T-cell (primary cell): ENCODE measurements at regions of chr2 and their contacts with region 1.

Region 1: GRCh38 chr2:234425619-234426603 is 71.0 kb downstream of the ARL4C start:
- DNase-seq: peak; percentile 66 to 93 (median 84)
- ATAC-seq: peak; percentile 79 to 88 (median 86)
- H3K4me3 ChIP-seq: peak overlapping the region; percentile 8 to 48
- H3K4me3 Mint-ChIP-seq: peak overlapping the region; percentile 37 to 81 (median 50)
- H3K27ac ChIP-seq: peak overlapping the region; percentile 94
- H3K27ac Mint-ChIP-seq: peak overlapping the region; percentile 97 to 98
- H3K4me1 ChIP-seq: peaks cover 71 to 89% of the 10 kb centered on the region in 2 experiments
- H3K4me1 Mint-ChIP-seq: peaks cover 93 to 98% (median 96%) of the 10 kb centered on the region in 3 donors
- H3K27me3 ChIP-seq: no peaks in the 10 kb centered on the region
- H3K27me3 Mint-ChIP-seq: no peaks in the 10 kb centered on the region

Region 2: GRCh38 chr2:234288974-234289455 is 136.9 kb before region 1 on chr2:
- CTCF ChIA-PET with region 1: interaction called, 3 to 16 read pairs
- POLR2A ChIA-PET with region 1: interaction called, 3 to 48 read pairs
- DNase-seq: peak; percentile 53 to 88 (median 70)
- ATAC-seq: peak in 1 of 4 experiments; percentile 1
- H3K4me3 ChIP-seq: no peak overlapping the region
- H3K4me3 Mint-ChIP-seq: peak overlapping the region in 1 of 3 donors; percentile 75
- H3K27ac ChIP-seq: peak overlapping the region; percentile 100
- H3K27ac Mint-ChIP-seq: peak overlapping the region; percentile 91 to 99
- H3K4me1 ChIP-seq: peaks cover 42 to 65% of the 10 kb centered on the region in 2 experiments
- H3K4me1 Mint-ChIP-seq: peaks cover 68 to 80% (median 74%) of the 10 kb centered on the region in 3 donors
- H3K27me3 ChIP-seq: no peaks in the 10 kb centered on the region
- H3K27me3 Mint-ChIP-seq: no peaks in the 10 kb centered on the region

Region 3: DNA sequence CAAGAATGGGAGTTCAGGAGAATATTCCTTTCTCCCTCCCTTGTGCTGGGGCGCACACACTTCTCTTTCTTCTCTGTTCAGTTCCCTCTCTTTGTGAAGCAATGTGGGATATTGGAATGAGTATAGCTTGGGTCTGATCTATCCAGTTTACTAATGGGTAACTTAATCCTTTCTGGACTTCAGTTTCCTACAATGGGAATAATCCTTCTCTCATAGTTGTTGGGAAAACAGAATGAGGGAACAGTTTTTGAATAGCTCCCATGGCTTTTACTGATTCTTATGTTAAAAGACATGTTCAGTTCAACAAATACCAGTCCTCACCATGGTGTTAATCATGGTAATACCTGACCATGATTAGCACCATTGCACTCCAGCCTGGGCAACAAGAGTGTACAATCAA is 22.2 kb before region 1 on chr2:
- CTCF ChIA-PET with region 1: interaction called in 1 of 2 experiments, 11 read pairs
- POLR2A ChIA-PET with region 1: no interaction called
- DNase-seq: no peak
- ATAC-seq: no peak
- H3K4me3 ChIP-seq: no peak overlapping the region
- H3K4me3 Mint-ChIP-seq: no peak overlapping the region
- H3K27ac ChIP-seq: no peak overlapping the region
- H3K27ac Mint-ChIP-seq: no peak overlapping the region
- H3K4me1 ChIP-seq: peaks cover 0 to 4% of the 10 kb centered on the region in 2 experiments
- H3K4me1 Mint-ChIP-seq: peaks cover 36 to 55% (median 51%) of the 10 kb centered on the region in 3 donors
- H3K27me3 ChIP-seq: no peaks in the 10 kb centered on the region
- H3K27me3 Mint-ChIP-seq: no peaks in the 10 kb centered on the region

Region 4: DNA sequence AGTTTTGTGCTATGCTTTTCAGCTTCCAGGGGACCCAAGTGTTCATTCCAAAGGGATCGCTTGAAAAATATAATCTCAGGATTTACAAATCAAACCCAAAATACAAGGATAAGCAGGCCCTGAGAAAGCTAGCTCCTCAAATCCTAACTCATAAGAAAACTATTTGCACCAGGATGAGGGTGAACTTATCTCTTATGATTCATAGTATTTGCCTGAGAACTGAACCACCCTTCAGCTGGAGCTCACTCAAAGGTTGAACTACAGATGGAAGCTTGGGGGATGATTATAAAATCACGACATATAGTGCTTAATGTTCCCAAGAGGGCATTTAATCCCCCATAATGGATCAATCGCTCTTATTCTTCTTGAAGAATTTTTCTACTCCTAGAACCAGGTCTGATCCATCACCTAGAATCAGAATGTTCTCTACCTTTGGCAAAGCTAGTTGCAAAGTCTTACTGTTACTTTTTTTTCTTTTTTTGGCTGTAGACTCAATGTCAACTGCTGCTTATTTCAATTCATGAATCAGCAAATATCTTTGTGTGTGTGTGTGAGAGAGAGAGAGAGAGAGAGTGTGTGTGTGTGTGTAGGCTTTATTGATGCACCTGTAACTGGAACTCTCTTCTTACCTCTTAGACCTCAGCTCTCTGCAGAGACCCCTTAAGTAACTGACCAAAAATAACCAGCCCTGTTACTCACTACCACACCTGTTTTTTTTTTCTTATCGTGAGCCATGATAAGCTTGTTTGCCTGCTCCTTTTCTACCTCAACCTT is 26.1 kb after region 1 on chr2:
- CTCF ChIA-PET with region 1: interaction called, 12 to 28 read pairs
- POLR2A ChIA-PET with region 1: interaction called, 17 to 74 read pairs
- DNase-seq: peak in 2 of 35 experiments; percentile 40 to 50
- ATAC-seq: peak in 3 of 4 experiments; percentile 3 to 11 (median 11)
- H3K4me3 ChIP-seq: peak overlapping the region; percentile 64 to 83
- H3K4me3 Mint-ChIP-seq: peak overlapping the region; percentile 87 to 90 (median 88)
- H3K27ac ChIP-seq: peak overlapping the region; percentile 90
- H3K27ac Mint-ChIP-seq: peak overlapping the region; percentile 91 to 99
- H3K4me1 ChIP-seq: peaks cover 49 to 68% of the 10 kb centered on the region in 2 experiments
- H3K4me1 Mint-ChIP-seq: peaks cover 82 to 94% (median 94%) of the 10 kb centered on the region in 3 donors
- H3K27me3 ChIP-seq: no peaks in the 10 kb centered on the region
- H3K27me3 Mint-ChIP-seq: no peaks in the 10 kb centered on the region

Region 5: DNA sequence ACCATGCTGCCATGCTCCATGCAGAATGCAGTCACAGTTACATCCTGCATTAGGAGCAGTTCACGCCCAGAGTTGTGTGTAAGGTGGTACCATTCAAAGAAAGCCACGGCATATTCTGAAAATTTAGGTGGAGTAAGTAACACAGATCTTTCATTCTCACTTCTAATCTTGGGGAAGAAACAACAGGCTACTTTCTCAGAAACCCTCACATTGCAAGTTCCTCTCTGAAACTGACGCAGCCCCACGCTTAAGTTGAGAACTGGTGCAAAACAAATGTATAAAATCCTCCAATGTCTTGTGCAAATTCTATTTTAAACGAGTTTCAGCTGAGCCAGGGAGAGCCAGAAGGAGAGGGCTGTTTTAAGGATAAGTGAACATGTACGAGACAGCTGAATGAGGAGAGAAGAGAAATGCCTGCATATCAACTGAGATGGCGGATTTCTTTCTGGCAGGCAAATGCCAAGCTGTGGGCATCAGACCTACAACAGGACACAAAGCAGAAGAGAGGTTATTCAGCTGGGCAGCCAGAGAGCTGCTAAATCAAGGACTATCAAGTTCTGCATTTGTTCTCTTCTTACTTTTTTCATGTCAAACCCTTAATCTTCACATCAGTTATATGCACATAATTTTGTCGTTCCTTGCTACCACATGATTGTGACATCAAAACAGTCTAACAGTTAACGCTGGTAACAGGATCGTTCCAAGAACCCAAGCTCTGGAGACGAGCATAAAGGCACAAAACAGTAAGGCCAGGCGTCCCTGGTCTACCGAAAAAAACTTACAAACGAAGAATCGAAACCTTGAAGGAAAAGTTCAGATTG is 64.6 kb after region 1 on chr2:
- CTCF ChIA-PET with region 1: interaction called, 6 to 7 read pairs
- POLR2A ChIA-PET with region 1: interaction called, 6 to 23 read pairs
- DNase-seq: peak in 11 of 35 experiments; percentile 16 to 56 (median 29)
- ATAC-seq: peak in 3 of 4 experiments; percentile 32 to 44 (median 35)
- H3K4me3 ChIP-seq: peak overlapping the region; percentile 81 to 99
- H3K4me3 Mint-ChIP-seq: peak overlapping the region; percentile 95 to 99 (median 99)
- H3K27ac ChIP-seq: peak overlapping the region; percentile 91
- H3K27ac Mint-ChIP-seq: peak overlapping the region; percentile 98 to 99
- H3K4me1 ChIP-seq: peaks cover 45 to 61% of the 10 kb centered on the region in 2 experiments
- H3K4me1 Mint-ChIP-seq: peaks cover 64 to 76% (median 67%) of the 10 kb centered on the region in 3 donors
- H3K27me3 ChIP-seq: no peaks in the 10 kb centered on the region
- H3K27me3 Mint-ChIP-seq: no peaks in the 10 kb centered on the region